HCT116 (cell line): ENCODE measurements at regions of chr1 and their contacts with region 1.

Region 1: DNA sequence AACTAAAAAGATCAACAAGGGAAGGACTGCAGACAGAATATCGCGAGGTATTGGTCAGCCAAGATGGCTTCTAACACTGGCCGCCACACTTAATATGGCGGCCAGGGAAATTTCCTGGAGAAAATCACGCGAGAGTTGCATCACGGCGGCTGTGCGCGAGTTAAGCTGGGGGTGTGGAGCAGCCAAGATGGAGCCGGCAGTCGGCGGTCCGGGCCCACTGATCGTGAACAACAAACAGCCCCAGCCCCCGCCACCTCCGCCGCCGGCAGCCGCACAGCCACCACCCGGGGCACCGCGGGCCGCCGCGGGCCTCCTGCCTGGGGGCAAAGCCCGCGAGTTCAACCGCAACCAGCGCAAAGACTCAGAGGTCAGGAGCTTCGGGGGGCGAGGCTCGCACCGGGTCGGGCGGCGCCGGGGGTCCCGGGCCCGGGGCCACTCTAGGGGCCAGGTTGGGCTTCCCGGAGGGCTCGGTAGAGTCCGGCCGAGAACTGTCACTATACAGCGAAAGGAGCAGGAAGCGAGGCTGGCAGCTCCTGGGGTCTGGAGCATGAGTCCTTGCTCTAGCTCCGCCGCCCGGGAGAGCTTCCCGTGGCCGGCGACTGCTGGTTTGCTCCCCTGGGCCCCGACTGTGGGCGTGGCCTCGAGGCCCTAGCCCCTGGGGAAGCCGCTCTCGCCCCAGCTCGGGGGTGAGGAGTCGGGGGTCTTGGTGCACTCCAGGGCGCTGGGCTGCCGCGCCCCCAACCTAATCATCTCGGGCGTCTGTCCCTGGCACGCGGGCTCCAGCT is at the start of gene STRIP1:
- DNase-seq: peak; percentile 91
- ATAC-seq: peak; percentile 89
- H3K4me3 ChIP-seq: peak within 1 kb of the TSS; percentile 88 to 89
- H3K27ac ChIP-seq: peak within 1 kb of the TSS; percentile 71
- H3K4me1 ChIP-seq: peaks cover 3 to 14% of the 10 kb centered on the region in 2 experiments; a peak in 3 of 4 replicates
- H3K27me3 ChIP-seq: no peaks in the 10 kb centered on the region
- CTCF ChIP-seq: no peak
- POLR2A ChIP-seq: peak; percentile 63
- RAD21 ChIP-seq: no peak
- total RNA-seq, gene STRIP1: 33.5 TPM

Region 2: DNA sequence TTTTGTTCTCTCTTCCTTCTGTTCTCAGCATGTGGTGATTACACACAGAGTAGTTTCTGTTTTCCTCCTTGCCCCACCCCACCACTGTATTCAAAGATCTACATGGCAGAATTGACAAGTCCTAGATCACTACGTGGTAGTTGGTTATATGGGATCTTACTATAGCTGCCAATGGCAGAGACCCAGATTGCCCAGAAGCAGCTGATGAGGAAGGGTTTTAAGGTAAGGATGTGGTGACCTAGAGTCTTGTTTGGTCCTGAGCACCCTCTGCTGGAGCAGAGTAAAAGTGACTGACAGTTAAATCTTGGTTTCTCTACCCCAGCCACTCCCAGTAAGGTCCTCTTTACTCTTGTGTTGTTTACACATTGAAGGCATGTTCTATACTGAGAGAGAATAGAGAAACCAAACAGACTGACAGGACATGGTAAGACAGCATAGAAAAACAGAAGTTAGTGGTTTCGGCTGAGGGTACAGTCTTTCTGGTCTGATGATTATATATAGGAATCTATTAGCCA is 23.1 kb before region 1 on chr1:
- CTCF ChIA-PET with region 1: interaction called, 10 read pairs
- POLR2A ChIA-PET with region 1: no interaction called
- RAD21 ChIA-PET with region 1: no interaction called
- intact Hi-C with region 1: no loop called
- DNase-seq: peak; percentile 39
- ATAC-seq: peak; percentile 98
- H3K4me3 ChIP-seq: no peak overlapping the region
- H3K27ac ChIP-seq: no peak overlapping the region
- H3K4me1 ChIP-seq: no peaks in the 10 kb centered on the region
- H3K27me3 ChIP-seq: no peaks in the 10 kb centered on the region
- CTCF ChIP-seq: peak; percentile 31 to 66 (median 55); a peak in 5 of 6 replicates
- POLR2A ChIP-seq: no peak
- RAD21 ChIP-seq: peak; percentile 69

Region 3: GRCh38 chr1:110060034-110060661 is 25.5 kb after region 1 on chr1:
- CTCF ChIA-PET with region 1: interaction called, 10 read pairs
- POLR2A ChIA-PET with region 1: no interaction called
- RAD21 ChIA-PET with region 1: no interaction called
- intact Hi-C with region 1: no loop called
- DNase-seq: no peak
- ATAC-seq: peak; percentile 93
- H3K4me3 ChIP-seq: no peak overlapping the region
- H3K27ac ChIP-seq: no peak overlapping the region
- H3K4me1 ChIP-seq: no peaks in the 10 kb centered on the region
- H3K27me3 ChIP-seq: no peaks in the 10 kb centered on the region
- CTCF ChIP-seq: peak; percentile 38 to 98 (median 95); a peak in 5 of 6 replicates
- POLR2A ChIP-seq: no peak
- RAD21 ChIP-seq: no peak

Region 4: GRCh38 chr1:110319332-110320152 is 284.9 kb after region 1 on chr1:
- CTCF ChIA-PET with region 1: no interaction called
- POLR2A ChIA-PET with region 1: no interaction called
- RAD21 ChIA-PET with region 1: no interaction called
- intact Hi-C with region 1: no loop called
- DNase-seq: no peak
- ATAC-seq: peak; percentile 40
- H3K4me3 ChIP-seq: no peak overlapping the region
- H3K27ac ChIP-seq: no peak overlapping the region
- H3K4me1 ChIP-seq: peaks cover 7 to 11% of the 10 kb centered on the region in 2 experiments; a peak in 2 of 4 replicates
- H3K27me3 ChIP-seq: no peaks in the 10 kb centered on the region
- CTCF ChIP-seq: peak in 2 of 3 experiments; percentile 13 to 25; a peak in 1 of 6 replicates
- POLR2A ChIP-seq: no peak
- RAD21 ChIP-seq: no peak

Region 5: GRCh38 chr1:110452330-110452729 is 417.7 kb after region 1 on chr1:
- CTCF ChIA-PET with region 1: no interaction called
- POLR2A ChIA-PET with region 1: no interaction called
- RAD21 ChIA-PET with region 1: no interaction called
- intact Hi-C with region 1: no loop called
- DNase-seq: no peak
- ATAC-seq: no peak
- H3K4me3 ChIP-seq: no peak overlapping the region
- H3K27ac ChIP-seq: no peak overlapping the region
- H3K4me1 ChIP-seq: no peaks in the 10 kb centered on the region
- H3K27me3 ChIP-seq: peaks cover 38% of the 10 kb centered on the region
- CTCF ChIP-seq: no peak
- POLR2A ChIP-seq: no peak
- RAD21 ChIP-seq: no peak